Panc1 (cell line): ENCODE measurements at regions of chr16 and their contacts with region 1.

Region 1: GRCh38 chr16:7161891-7162290 is 170.8 kb upstream of the RBFOX1 start:
- DNase-seq: no peak
- ATAC-seq: no peak
- H3K4me3 ChIP-seq: no peak overlapping the region
- H3K27ac ChIP-seq: no peak overlapping the region
- H3K4me1 ChIP-seq: no peaks in the 10 kb centered on the region
- H3K27me3 ChIP-seq: no peaks in the 10 kb centered on the region
- CTCF ChIP-seq: no peak

Region 2: DNA sequence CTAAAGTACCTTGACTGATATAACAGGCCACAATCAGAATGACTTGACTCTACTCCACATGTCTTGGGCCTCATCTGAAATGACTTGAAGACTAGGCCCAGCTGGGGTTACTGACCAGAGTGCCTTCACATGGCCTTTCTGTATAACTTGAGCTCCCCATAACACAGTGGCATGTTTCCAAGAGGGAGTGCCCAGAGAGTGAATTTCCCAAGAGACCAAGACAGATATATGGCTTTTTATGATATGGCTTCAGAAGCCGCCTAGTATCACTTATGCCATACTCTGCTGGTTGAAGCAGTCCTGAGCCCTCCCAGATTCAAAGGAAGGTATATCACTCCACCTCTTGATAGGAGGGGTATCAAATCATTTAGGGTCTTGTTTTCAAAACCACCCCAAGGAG is 1706.8 kb before region 1 on chr16:
- CTCF ChIA-PET with region 1: no interaction called
- POLR2A ChIA-PET with region 1: interaction called, 12 read pairs
- in situ Hi-C with region 1: no loop called
- intact Hi-C with region 1: no loop called
- DNase-seq: no peak
- ATAC-seq: no peak
- H3K4me3 ChIP-seq: no peak overlapping the region
- H3K27ac ChIP-seq: no peak overlapping the region
- H3K4me1 ChIP-seq: no peaks in the 10 kb centered on the region
- H3K27me3 ChIP-seq: peaks cover 6% of the 10 kb centered on the region; the same call in 1 of the 2 replicates
- CTCF ChIP-seq: no peak

Region 3: GRCh38 chr16:7140899-7141298 is 21.0 kb before region 1 on chr16:
- CTCF ChIA-PET with region 1: no interaction called
- POLR2A ChIA-PET with region 1: no interaction called
- in situ Hi-C with region 1: no loop called
- intact Hi-C with region 1: no loop called
- DNase-seq: peak; percentile 41
- ATAC-seq: no peak
- H3K4me3 ChIP-seq: no peak overlapping the region
- H3K27ac ChIP-seq: no peak overlapping the region
- H3K4me1 ChIP-seq: no peaks in the 10 kb centered on the region
- H3K27me3 ChIP-seq: no peaks in the 10 kb centered on the region
- CTCF ChIP-seq: no peak